Activated CD4-positive, alpha-beta memory T cell treated with anti-CD3 and anti-CD28 coated beads for 36 hours (primary cell): ENCODE measurements at regions of chr13 and their contacts with region 1.

Region 1: DNA sequence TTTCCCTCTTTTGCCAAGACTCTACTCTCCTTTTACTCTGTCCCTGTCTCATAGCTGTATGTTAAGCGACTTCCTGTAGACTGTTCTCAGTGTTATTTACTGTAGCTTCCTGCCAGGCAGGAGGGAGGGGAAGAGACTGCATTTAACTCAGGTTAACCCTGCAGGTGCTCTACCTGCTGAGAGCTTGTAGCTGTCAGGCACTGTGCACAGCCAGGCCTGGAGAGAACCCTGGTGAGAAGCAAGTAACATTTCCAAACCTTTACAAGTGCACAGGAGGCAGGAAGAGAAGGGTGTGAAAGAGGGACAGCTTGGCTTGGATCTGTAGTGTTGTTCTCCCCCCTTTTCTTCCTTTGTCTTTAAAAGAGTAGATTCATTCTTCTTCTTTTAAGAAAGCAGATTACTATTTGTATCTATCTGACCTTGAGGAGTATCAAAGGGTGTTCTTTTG is 167.1 kb downstream of the LMO7 start:
- DNase-seq: no peak
- H3K4me3 Mint-ChIP-seq: no peak overlapping the region
- H3K27ac Mint-ChIP-seq: no peak overlapping the region
- H3K4me1 Mint-ChIP-seq: peaks cover 42% of the 10 kb centered on the region
- H3K27me3 Mint-ChIP-seq: no peaks in the 10 kb centered on the region

Region 2: DNA sequence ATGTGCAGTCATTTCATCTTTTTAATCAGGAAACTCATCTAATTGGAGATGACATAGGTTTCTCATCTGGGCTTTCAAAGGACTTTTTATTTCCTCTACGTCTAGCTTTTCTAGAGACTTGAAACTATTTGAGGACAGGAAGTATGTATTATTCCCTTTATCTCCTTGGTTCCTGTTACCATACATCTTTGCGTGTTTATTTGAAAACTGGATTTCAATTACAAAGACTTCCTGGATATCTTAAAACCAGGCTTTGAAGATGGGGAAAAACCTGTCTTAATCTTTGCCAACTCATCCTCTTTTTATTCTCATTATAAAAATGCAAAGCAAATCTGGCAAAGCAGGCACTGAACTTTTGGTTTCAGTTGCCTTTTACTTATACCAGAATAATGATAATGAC is 36.6 kb before region 1 on chr13:
- CTCF ChIA-PET with region 1: interaction called, 11 read pairs
- POLR2A ChIA-PET with region 1: interaction called, 3 read pairs
- intact Hi-C with region 1: loop called (anchors 1 kb)
- DNase-seq: no peak
- H3K4me3 Mint-ChIP-seq: no peak overlapping the region
- H3K27ac Mint-ChIP-seq: no peak overlapping the region
- H3K4me1 Mint-ChIP-seq: peaks cover 50% of the 10 kb centered on the region
- H3K27me3 Mint-ChIP-seq: no peaks in the 10 kb centered on the region

Region 3: DNA sequence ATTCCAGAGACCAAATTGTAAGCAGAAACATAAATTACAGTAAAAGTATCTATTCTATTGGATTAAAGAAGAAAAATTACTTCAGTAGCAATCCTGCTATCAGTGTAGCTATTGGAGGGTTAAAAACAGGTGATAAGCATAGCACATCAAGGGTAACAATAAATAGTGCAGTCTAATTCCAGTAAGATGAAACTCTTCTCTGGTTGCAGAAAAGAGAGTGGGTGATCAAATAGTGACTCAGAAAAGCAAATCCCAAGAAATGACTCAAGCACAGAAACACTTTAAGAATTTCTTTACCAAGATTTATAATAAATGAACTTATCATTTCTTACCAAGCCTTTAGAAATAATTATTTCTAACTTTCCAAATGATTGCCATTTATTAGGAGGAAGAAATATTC is 31.4 kb before region 1 on chr13:
- CTCF ChIA-PET with region 1: no interaction called
- POLR2A ChIA-PET with region 1: no interaction called
- intact Hi-C with region 1: loop called (anchors 1 kb)
- DNase-seq: no peak
- H3K4me3 Mint-ChIP-seq: no peak overlapping the region
- H3K27ac Mint-ChIP-seq: no peak overlapping the region
- H3K4me1 Mint-ChIP-seq: peaks cover 23% of the 10 kb centered on the region
- H3K27me3 Mint-ChIP-seq: no peaks in the 10 kb centered on the region

Region 4: DNA sequence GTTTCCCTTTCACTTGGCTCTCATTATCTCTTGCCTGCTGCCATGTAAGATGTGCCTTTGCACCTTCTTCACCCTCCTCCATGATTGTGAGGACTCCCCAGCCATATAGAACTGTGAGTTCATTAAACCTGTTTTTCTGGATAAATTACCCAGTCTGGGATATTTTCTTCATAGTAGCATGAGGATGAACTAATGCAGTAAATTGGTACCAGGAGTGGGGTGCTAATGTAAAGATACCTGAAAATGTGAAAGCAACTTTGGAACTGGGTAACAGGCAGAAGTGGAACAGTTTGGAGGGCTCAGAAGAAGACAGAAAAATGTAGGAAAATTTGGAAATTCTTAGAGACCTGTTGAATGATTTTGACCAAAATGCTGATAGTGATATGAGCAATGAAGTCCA is 320.4 kb after region 1 on chr13:
- CTCF ChIA-PET with region 1: no interaction called
- POLR2A ChIA-PET with region 1: no interaction called
- intact Hi-C with region 1: no loop called
- DNase-seq: no peak
- H3K4me3 Mint-ChIP-seq: no peak overlapping the region
- H3K27ac Mint-ChIP-seq: no peak overlapping the region
- H3K4me1 Mint-ChIP-seq: no peaks in the 10 kb centered on the region
- H3K27me3 Mint-ChIP-seq: no peaks in the 10 kb centered on the region